ENCODE measurements at regions of chr17 and their contacts with region 1.

Region 1: DNA sequence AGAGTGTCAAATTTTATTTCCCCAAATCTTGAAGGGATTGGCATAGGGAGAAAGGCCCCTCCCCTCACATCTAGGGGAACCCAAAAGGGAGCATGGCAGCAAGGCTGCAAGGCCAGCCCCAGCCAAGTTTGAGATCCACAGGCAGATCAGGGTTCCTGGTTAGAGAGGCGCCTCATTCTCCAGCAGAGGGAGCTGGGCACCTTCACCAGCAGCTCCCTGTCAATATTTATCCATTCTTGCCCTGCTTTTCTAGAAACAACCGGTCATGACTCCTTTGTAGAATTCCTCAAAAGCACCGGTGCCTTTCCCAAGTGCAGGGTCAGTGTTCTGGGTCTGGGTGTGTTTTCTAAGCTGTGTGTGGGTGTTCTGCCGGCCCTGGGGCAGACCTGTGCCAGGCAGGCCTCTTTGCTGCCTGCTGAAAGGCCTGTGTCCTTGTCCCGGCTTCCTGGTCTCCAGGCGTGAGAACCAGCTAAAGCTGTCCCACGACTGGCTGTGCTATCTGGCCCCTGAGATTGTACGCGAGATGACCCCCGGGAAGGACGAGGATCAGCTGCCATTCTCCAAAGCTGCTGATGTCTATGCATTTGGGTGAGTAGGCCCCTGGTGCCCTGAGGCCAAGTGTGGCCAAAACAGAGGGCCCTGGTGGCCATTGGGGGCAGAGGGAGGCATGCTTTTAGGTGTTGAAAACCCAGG is 21.2 kb upstream of the LGALS9 start:
- DNase-seq: peak; percentile 68 to 88 (median 77)
- H3K4me3 ChIP-seq: no peak overlapping the region
- H3K27ac ChIP-seq: peak overlapping the region in 3 of 5 donors; percentile 33 to 60 (median 33)
- H3K4me1 ChIP-seq: peaks cover 15 to 34% of the 10 kb centered on the region in 2 donors
- H3K27me3 ChIP-seq: no peaks in the 10 kb centered on the region
- CTCF ChIP-seq: peak; percentile 64 to 88 (median 80)
- POLR2A ChIP-seq: no peak

Region 2: GRCh38 chr17:27323524-27324206 is 286.1 kb before region 1 on chr17:
- intact Hi-C with region 1: no loop called
- DNase-seq: peak; percentile 31 to 74 (median 60)
- H3K4me3 ChIP-seq: no peak overlapping the region
- H3K27ac ChIP-seq: peak overlapping the region in 2 of 5 donors; percentile 38 to 45
- H3K4me1 ChIP-seq: peaks cover 7 to 23% of the 10 kb centered on the region in 2 donors
- H3K27me3 ChIP-seq: no peaks in the 10 kb centered on the region
- CTCF ChIP-seq: no peak
- POLR2A ChIP-seq: no peak

Region 3: GRCh38 chr17:27559506-27560481 is 50.0 kb before region 1 on chr17:
- intact Hi-C with region 1: no loop called
- DNase-seq: peak in 6 of 7 donors; percentile 61 to 83 (median 69)
- H3K4me3 ChIP-seq: peak overlapping the region in 1 of 4 donors; percentile 18
- H3K27ac ChIP-seq: peak overlapping the region in 4 of 5 donors; percentile 39 to 85 (median 64)
- H3K4me1 ChIP-seq: peaks cover 14 to 49% of the 10 kb centered on the region in 2 donors
- H3K27me3 ChIP-seq: no peaks in the 10 kb centered on the region
- CTCF ChIP-seq: peak in 2 of 6 experiments; percentile 31 to 35
- POLR2A ChIP-seq: no peak

Region 4: GRCh38 chr17:27654654-27655524 is 45.1 kb after region 1 on chr17:
- intact Hi-C with region 1: loop called (anchors 2 kb)
- DNase-seq: peak; percentile 67 to 91 (median 77)
- H3K4me3 ChIP-seq: no peak overlapping the region
- H3K27ac ChIP-seq: no peak overlapping the region
- H3K4me1 ChIP-seq: no peaks in the 10 kb centered on the region
- H3K27me3 ChIP-seq: no peaks in the 10 kb centered on the region
- CTCF ChIP-seq: peak; percentile 93 to 98 (median 97)
- POLR2A ChIP-seq: no peak

Measured in adrenal gland (tissue), 19 donors.